Activated B cell treated with CpG ODN at 0.5 μM for 24 hours (primary cell): ENCODE measurements at regions of chr3 and their contacts with region 1.

Region 1: GRCh38 chr3:169764452-169765274 is at the start of gene TERC:
- DNase-seq: peak; percentile 78
- ATAC-seq: peak; percentile 79
- H3K4me3 Mint-ChIP-seq: peak within 1 kb of the TSS; percentile 96
- H3K27ac Mint-ChIP-seq: peak within 1 kb of the TSS; percentile 99
- H3K4me1 Mint-ChIP-seq: peaks cover 25% of the 10 kb centered on the region
- H3K27me3 Mint-ChIP-seq: no peaks in the 10 kb centered on the region
- CTCF ChIP-seq: no peak
- total RNA-seq, gene TERC: 2.5 and 8.4 TPM in 2 replicates

Region 2: GRCh38 chr3:169186596-169186995 is 578.1 kb before region 1 on chr3:
- CTCF ChIA-PET with region 1: no interaction called
- POLR2A ChIA-PET with region 1: no interaction called
- intact Hi-C with region 1: no loop called
- DNase-seq: no peak
- ATAC-seq: no peak
- H3K4me3 Mint-ChIP-seq: no peak overlapping the region
- H3K27ac Mint-ChIP-seq: no peak overlapping the region
- H3K4me1 Mint-ChIP-seq: no peaks in the 10 kb centered on the region
- H3K27me3 Mint-ChIP-seq: no peaks in the 10 kb centered on the region
- CTCF ChIP-seq: no peak

Region 3: DNA sequence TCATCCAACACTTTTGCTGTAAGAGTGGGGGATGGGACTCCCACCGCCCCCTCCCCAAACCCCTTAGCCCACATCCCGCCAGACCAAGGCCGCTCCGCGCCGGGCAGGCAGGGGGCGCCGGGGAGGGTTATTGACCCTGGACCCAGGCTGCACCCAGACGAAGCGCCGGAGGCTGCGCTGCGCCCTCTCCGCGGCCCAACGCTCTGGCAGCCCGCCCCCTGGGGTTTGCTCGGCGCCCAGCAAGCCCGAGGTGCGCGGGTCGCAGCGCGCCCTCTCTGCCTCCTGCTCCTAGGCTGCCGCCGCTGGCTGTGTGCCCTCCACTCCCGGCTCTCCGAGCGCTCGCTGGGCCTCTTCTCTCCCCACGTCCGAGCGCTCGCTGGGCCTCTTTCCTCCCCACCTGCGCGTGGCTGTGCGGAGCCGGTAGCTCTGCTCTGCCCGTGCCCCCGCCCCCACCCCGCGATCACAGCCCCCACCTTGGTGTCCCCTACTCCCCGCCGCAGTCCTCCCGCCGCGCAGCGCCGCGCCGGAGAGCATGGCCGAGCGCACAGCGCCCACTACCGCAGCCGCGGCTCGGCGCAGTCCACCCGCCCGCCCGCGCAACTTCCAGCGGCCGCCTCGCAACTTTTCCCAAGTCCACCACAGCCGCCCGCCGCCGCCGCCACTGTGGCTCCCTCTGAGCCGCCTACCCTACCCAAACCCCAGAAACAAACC is 102.4 kb before region 1 on chr3:
- CTCF ChIA-PET with region 1: no interaction called
- POLR2A ChIA-PET with region 1: interaction called, 3 read pairs
- intact Hi-C with region 1: loop called (anchors 5 kb)
- DNase-seq: peak; percentile 46
- ATAC-seq: peak; percentile 72
- H3K4me3 Mint-ChIP-seq: peak overlapping the region; percentile 87
- H3K27ac Mint-ChIP-seq: no peak overlapping the region
- H3K4me1 Mint-ChIP-seq: peaks cover 58% of the 10 kb centered on the region
- H3K27me3 Mint-ChIP-seq: peaks cover 72% of the 10 kb centered on the region
- CTCF ChIP-seq: no peak

Region 4: GRCh38 chr3:169694117-169694516 is 70.5 kb before region 1 on chr3:
- CTCF ChIA-PET with region 1: no interaction called
- POLR2A ChIA-PET with region 1: no interaction called
- intact Hi-C with region 1: no loop called
- DNase-seq: no peak
- ATAC-seq: no peak
- H3K4me3 Mint-ChIP-seq: no peak overlapping the region
- H3K27ac Mint-ChIP-seq: no peak overlapping the region
- H3K4me1 Mint-ChIP-seq: no peaks in the 10 kb centered on the region
- H3K27me3 Mint-ChIP-seq: peaks cover 16% of the 10 kb centered on the region
- CTCF ChIP-seq: no peak

Region 5: DNA sequence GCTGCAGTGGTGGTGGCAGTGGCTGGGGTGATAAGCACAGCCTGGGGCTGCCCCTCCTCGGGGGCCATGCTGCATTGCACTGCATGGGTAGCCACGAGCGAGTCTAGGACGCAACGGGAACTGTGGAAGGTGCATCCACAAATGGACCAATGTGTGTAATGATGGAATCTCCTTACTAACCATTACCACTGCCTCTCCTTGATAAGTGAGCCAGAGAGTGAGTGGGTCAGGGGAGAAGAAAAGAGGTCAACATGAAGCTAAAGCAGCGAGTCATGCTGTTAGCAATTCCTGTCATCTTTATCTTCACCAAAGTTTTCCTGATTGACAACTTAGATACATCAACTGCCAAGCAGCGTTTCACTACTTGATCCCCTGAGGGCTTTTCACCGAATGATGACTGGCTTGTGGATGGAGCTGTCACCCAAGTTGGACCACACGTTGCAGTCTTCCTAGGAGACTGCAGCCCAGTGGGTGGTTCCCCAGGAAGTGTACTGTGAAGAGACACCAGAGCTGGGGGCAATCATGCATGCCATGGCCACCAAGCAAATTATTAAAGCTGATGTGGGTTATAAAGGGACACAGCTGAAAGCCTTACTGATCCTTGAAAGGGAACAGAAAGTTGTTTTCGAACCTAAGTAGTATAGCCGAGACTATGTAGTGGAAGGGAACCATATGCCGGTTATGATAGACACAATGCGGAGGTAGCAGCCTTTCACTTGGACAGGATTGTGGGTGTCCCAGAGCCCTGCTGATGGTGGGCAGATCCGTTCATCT is 167.3 kb after region 1 on chr3:
- CTCF ChIA-PET with region 1: interaction called, 4 read pairs
- POLR2A ChIA-PET with region 1: interaction called, 9 read pairs
- intact Hi-C with region 1: loop called (anchors 2 kb)
- DNase-seq: peak; percentile 55
- ATAC-seq: peak; percentile 88
- H3K4me3 Mint-ChIP-seq: peak overlapping the region; percentile 70
- H3K27ac Mint-ChIP-seq: peak overlapping the region; percentile 95
- H3K4me1 Mint-ChIP-seq: peaks cover 52% of the 10 kb centered on the region
- H3K27me3 Mint-ChIP-seq: no peaks in the 10 kb centered on the region
- CTCF ChIP-seq: no peak

Region 6: GRCh38 chr3:170037463-170038433 is 273.1 kb after region 1 on chr3 and contains the start of gene GPR160:
- CTCF ChIA-PET with region 1: no interaction called
- POLR2A ChIA-PET with region 1: interaction called, 11 read pairs
- intact Hi-C with region 1: loop called (anchors 1 kb)
- DNase-seq: peak; percentile 88
- ATAC-seq: peak; percentile 77
- H3K4me3 Mint-ChIP-seq: peak within 1 kb of the TSS; percentile 93
- H3K27ac Mint-ChIP-seq: peak within 1 kb of the TSS; percentile 88
- H3K4me1 Mint-ChIP-seq: peaks cover 46% of the 10 kb centered on the region
- H3K27me3 Mint-ChIP-seq: no peaks in the 10 kb centered on the region
- CTCF ChIP-seq: peak; percentile 52
- total RNA-seq, gene GPR160: 63.2 and 65.5 TPM in 2 replicates

Region 7: GRCh38 chr3:170307671-170308403 is 543.2 kb after region 1 on chr3:
- CTCF ChIA-PET with region 1: no interaction called
- POLR2A ChIA-PET with region 1: interaction called, 7 read pairs
- intact Hi-C with region 1: loop called (anchors 1 kb)
- DNase-seq: no peak
- ATAC-seq: no peak
- H3K4me3 Mint-ChIP-seq: no peak overlapping the region
- H3K27ac Mint-ChIP-seq: no peak overlapping the region
- H3K4me1 Mint-ChIP-seq: peaks cover 10% of the 10 kb centered on the region
- H3K27me3 Mint-ChIP-seq: no peaks in the 10 kb centered on the region
- CTCF ChIP-seq: no peak

Region 8: GRCh38 chr3:170869645-170870593 is 1105.3 kb after region 1 on chr3 and contains the start of gene RPL22L1:
- CTCF ChIA-PET with region 1: no interaction called
- POLR2A ChIA-PET with region 1: interaction called, 4 read pairs
- intact Hi-C with region 1: loop called (anchors 2 kb)
- DNase-seq: peak; percentile 89
- ATAC-seq: peak; percentile 86
- H3K4me3 Mint-ChIP-seq: peak within 1 kb of the TSS; percentile 95
- H3K27ac Mint-ChIP-seq: peak within 1 kb of the TSS; percentile 97
- H3K4me1 Mint-ChIP-seq: peaks cover 34% of the 10 kb centered on the region
- H3K27me3 Mint-ChIP-seq: no peaks in the 10 kb centered on the region
- CTCF ChIP-seq: no peak
- total RNA-seq, gene RPL22L1: 109 and 124 TPM in 2 replicates

Region 9: DNA sequence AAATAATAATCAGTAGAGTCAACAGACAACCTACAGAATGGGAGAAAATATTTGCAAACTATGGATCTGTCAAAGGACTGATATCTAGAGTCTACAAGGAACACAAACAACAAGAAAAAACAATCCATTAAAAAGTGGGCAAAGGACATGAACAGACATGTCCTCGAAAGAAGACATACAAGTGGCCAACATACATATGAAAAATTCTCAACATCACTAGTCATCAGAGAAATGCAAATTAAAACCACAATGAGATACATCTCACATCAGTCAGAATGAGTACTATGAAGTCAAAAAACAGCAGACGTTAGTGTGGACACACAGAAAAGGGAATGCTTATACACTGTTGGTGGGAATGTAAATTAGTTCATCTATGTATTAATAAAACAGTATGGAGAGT is 1228.2 kb after region 1 on chr3:
- CTCF ChIA-PET with region 1: no interaction called
- POLR2A ChIA-PET with region 1: no interaction called
- intact Hi-C with region 1: no loop called
- DNase-seq: no peak
- ATAC-seq: no peak
- H3K4me3 Mint-ChIP-seq: no peak overlapping the region
- H3K27ac Mint-ChIP-seq: no peak overlapping the region
- H3K4me1 Mint-ChIP-seq: no peaks in the 10 kb centered on the region
- H3K27me3 Mint-ChIP-seq: peaks cover 6% of the 10 kb centered on the region
- CTCF ChIP-seq: no peak